ENCODE measurements at regions of chr11 and their contacts with region 1.

Region 1: DNA sequence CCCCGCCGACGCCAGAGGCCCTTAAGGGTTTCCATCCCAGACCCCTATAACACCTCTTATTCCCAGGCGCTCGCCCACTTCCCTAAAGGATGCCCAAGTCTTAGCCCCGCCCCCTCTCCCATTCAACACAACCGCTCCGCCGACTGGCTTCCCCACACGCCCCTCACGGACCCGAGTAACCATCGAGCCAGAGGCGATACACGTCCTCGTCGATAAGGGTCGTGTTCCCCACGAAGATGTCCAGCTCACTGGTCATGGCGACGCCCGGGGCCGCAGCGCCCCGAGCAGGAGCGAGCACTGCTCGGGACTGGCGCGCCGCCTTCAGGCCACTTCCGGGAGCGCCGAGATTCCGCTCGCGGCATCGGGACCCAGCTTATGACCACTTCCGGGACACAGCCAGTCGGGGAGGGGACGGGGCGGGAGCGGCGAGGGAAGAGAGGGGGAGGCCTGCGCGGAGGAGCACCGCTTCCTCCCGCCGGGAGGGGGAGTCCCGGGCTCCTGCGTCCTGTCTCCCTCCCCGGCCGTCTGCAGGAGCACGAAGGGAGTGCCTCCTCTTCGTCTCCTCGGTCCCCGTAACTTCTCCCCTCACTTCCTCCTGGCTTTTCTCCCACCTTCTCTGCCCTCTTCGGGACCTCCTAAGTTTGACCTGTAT is at the start of gene FIBP:
- DNase-seq: peak; percentile 97
- CTCF ChIP-seq: peak; percentile 73

Region 2: DNA sequence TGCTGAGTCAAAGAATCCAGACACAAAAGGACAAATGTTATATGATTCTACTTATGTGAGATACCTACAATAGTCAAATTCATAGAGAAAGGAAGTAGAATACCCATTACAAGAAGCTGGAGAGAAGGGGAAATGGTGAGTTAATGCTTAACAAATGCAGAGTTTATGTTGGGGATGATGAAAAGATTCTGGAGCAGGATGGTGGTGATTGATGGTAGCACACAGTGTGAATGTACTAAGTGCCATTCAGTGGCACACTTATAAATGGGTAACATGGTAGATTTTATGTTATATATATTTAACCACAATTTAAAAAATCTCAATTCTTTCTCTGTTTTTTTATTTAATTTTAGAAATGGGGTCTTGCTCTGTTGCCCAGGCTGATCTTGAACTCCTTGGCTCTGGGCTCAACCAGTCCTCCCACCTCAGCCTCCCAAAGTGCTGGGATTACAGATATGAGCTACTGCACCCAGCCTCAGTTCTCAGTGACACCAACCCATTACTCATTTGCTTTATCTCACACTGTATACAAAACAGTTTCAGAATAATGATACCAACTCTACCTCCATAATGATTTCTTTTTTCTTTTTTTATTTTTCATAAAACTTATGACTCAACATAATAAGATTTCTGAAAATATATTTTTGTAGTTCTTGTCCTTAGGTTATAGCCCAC is 216.0 kb before region 1 on chr11:
- CTCF ChIA-PET with region 1: no interaction called
- POLR2A ChIA-PET with region 1: no interaction called
- DNase-seq: no peak
- CTCF ChIP-seq: no peak

Region 3: GRCh38 chr11:65743928-65744698 is 144.2 kb before region 1 on chr11:
- CTCF ChIA-PET with region 1: no interaction called
- POLR2A ChIA-PET with region 1: no interaction called
- DNase-seq: no peak
- CTCF ChIP-seq: no peak

Region 4: DNA sequence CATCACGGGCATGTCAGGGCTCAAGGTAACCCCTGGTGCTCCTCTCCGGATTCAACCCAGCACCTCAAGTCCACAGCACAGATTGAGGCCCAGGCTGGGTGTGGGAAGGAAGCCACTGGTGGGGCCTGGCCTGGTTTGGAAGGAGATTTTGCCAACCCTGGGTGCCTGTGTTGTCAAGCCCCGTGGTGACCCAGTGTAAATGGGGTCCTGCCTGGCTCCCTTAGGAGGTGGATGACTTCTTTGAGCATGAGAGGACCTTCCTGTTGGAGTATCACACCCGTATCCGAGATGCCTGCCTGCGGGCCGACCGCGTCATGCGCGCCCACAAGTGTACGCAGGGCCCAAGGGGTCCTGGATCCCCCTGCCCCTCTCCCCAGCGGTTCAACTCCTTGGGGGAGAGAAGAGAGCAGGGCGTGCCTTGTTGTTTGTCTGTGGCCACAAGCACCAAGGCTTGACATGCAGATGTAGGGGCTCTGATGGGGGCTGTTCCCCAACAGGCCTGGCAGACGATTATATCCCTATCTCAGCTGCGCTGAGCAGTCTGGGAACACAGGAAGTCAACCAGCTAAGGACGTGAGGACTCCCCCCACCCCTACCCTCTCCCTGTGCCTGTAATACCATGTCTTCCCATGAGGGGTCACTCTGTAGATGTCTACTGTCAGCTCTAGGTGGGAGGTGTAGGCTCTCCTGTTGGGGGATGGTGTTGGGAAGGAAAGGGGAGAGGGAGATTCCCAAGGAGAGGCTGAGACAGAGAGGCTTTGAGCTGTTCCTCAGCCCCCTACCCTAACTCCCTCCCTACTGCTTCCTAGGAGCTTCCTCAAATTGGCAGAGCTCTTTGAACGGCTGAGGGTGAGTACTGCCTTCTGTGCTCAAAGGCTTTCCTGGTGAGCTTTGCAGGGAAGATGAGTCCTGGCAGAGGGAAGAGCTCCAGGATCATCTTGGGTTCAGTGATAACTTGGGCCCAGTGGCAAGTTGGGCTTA is 37.2 kb before region 1 on chr11:
- CTCF ChIA-PET with region 1: interaction called, 29 read pairs
- POLR2A ChIA-PET with region 1: interaction called, 12 read pairs
- DNase-seq: no peak
- CTCF ChIP-seq: no peak

Region 5: DNA sequence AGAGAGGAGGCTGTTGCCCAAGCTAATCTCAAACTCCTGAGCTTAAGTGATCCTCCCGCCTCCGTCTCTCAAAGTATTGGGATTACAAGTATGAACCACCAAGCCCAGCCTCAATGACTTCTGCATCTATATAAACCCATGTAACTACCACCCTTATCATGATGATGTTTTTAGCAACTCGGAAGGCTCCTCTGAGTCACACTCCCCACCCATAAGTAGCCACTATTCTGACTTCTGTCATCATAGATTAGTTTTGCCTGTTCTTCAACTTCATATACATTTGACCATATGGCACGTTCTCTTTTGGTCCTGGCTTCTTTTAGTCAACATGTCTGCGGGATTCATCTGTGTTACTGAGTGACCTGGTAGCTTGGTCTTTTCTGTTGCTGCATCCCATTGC is 18.3 kb after region 1 on chr11:
- CTCF ChIA-PET with region 1: interaction called, 80 read pairs
- POLR2A ChIA-PET with region 1: interaction called, 10 read pairs
- DNase-seq: no peak
- CTCF ChIP-seq: no peak

Region 6: GRCh38 chr11:65934014-65934413 is 45.7 kb after region 1 on chr11:
- CTCF ChIA-PET with region 1: interaction called, 24 read pairs
- POLR2A ChIA-PET with region 1: no interaction called
- DNase-seq: no peak
- CTCF ChIP-seq: no peak

Region 7: GRCh38 chr11:65988791-65989592 is 100.7 kb after region 1 on chr11:
- CTCF ChIA-PET with region 1: interaction called, 287 read pairs
- POLR2A ChIA-PET with region 1: no interaction called
- DNase-seq: peak; percentile 91
- CTCF ChIP-seq: peak; percentile 99

Region 8: GRCh38 chr11:66069715-66070603 is 181.7 kb after region 1 on chr11 and contains the start of gene PACS1:
- CTCF ChIA-PET with region 1: interaction called, 13 read pairs
- POLR2A ChIA-PET with region 1: no interaction called
- DNase-seq: peak; percentile 90
- CTCF ChIP-seq: no peak

Measured in GM10248 (cell line).